A549 (cell line): ENCODE measurements at regions of chr2 and their contacts with region 1.

Region 1: DNA sequence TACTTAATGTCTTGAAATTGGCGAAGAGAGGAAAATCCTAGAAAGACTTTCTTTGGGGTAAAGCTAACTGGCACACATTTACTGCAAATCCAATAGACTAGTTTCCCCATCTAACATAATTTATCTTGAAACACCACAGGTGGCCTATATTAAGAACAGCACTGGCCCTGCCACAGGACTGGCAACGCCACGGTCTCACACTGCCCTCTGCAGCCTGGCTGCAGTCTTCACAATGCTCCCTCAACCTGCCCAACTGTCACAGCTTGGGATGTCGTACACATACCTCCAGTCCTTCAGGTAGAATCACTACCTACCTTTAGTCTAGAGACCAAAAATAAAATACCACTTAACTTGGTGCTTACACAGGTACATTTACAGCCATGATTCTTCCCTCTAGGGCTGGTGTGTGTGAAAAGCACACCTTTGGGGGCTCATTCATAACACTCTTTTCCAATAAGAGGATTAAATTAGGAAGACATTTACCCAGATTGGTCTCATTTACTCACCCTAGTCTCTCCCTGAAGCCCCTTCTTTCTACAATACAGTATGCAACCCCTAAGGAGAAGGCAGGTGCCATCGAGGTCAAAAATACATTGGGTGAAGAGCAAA is 222.2 kb downstream of the C1D start:
- DNase-seq: peak; percentile 46 to 72
- ATAC-seq: peak; percentile 96 to 100
- H3K4me3 ChIP-seq: no peak overlapping the region
- H3K27ac ChIP-seq: no peak overlapping the region
- H3K4me1 ChIP-seq: no peaks in the 10 kb centered on the region
- CTCF ChIP-seq: peak; percentile 89
- EP300 ChIP-seq: no peak
- POLR2A ChIP-seq: no peak
- RAD21 ChIP-seq: peak; percentile 96

Region 2: GRCh38 chr2:66434679-66435548 is 1405.7 kb before region 1 on chr2 and contains the start of gene MEIS1:
- CTCF ChIA-PET with region 1: interaction called, 10 read pairs
- POLR2A ChIA-PET with region 1: no interaction called
- DNase-seq: peak; percentile 93 to 95
- ATAC-seq: peak; percentile 87 to 90
- H3K4me3 ChIP-seq: peak within 1 kb of the TSS; percentile 77
- H3K27ac ChIP-seq: peak within 1 kb of the TSS; percentile 70 to 86
- H3K4me1 ChIP-seq: peaks cover 7% of the 10 kb centered on the region; the same call in 1 of the 3 replicates
- CTCF ChIP-seq: no peak
- EP300 ChIP-seq: no peak
- POLR2A ChIP-seq: peak; percentile 91
- RAD21 ChIP-seq: no peak
- polyA plus RNA-seq, gene MEIS1: 2.9 and 4.2 TPM in 2 replicates

Region 3: DNA sequence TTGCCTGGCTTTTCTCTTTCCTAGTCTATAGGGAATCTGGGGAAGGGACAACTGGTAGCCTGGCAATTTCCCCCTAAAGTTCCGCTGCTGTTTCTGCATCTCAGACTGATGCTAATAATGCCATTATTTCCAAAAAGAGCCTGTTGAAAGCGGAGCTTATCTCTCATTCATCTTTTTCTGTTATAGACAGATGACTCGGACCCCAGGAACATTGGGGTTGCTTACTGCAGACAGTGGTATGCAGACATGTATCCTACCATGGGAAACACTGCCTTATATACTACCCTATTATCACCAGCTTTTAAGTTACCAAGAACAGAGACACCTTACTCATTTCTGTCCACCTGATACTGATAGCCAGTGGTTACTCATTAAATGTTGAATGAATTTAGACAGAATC is 428.1 kb before region 1 on chr2:
- CTCF ChIA-PET with region 1: no interaction called
- POLR2A ChIA-PET with region 1: no interaction called
- DNase-seq: no peak
- ATAC-seq: peak in 1 of 2 experiments; percentile 46; a peak in 2 of 6 replicates
- H3K4me3 ChIP-seq: no peak overlapping the region
- H3K27ac ChIP-seq: no peak overlapping the region
- H3K4me1 ChIP-seq: 0 out of 3 replicates have a peak, but pooled peaks cover 5% of the 10 kb centered on the region
- CTCF ChIP-seq: no peak
- EP300 ChIP-seq: no peak
- POLR2A ChIP-seq: no peak
- RAD21 ChIP-seq: no peak

Region 4: GRCh38 chr2:67752969-67753368 is 87.6 kb before region 1 on chr2:
- CTCF ChIA-PET with region 1: no interaction called
- POLR2A ChIA-PET with region 1: no interaction called
- DNase-seq: no peak
- ATAC-seq: no peak
- H3K4me3 ChIP-seq: no peak overlapping the region
- H3K27ac ChIP-seq: no peak overlapping the region
- H3K4me1 ChIP-seq: no peaks in the 10 kb centered on the region
- CTCF ChIP-seq: no peak
- EP300 ChIP-seq: no peak
- POLR2A ChIP-seq: no peak
- RAD21 ChIP-seq: no peak

Region 5: DNA sequence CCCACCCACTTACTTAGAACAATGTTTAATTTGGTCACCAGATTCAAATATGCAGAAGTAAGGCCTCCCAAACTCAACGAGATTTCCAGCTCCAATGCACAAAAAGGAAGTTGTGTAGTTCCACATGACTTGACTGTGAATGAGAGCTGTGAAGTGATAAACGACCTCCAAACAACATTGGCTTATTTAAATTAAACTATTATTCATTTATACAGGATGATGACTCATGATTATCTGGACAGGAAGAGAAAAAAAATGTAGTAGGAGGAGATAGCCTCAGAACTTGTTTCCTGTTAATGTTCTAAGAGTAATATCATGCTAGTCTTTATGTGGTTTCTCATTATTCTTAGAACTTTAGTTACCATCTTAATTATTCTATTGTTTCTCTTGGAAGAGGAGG is 15.1 kb before region 1 on chr2:
- CTCF ChIA-PET with region 1: interaction called, 15 read pairs
- POLR2A ChIA-PET with region 1: no interaction called
- DNase-seq: no peak
- ATAC-seq: no peak
- H3K4me3 ChIP-seq: no peak overlapping the region
- H3K27ac ChIP-seq: no peak overlapping the region
- H3K4me1 ChIP-seq: no peaks in the 10 kb centered on the region
- CTCF ChIP-seq: no peak
- EP300 ChIP-seq: no peak
- POLR2A ChIP-seq: no peak
- RAD21 ChIP-seq: no peak

Region 6: DNA sequence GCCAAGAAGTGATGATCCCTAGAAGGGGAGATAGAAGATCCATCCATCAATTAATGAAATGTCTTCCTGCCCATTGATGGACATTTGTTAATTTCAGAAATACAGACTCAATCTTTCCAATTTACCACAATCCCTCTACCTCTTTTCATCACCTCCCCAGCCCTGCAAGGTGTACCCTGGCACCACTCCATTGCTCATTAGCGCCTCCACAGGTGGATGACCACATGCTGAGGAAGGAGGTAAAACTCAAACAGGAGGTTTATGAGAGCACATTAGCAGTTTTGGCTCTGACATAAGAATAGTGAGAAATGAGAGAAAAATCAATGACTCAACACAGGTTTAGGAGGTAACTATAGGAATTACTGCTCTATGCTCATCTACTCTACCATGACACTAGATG is 14.2 kb after region 1 on chr2:
- CTCF ChIA-PET with region 1: interaction called, 16 read pairs
- POLR2A ChIA-PET with region 1: no interaction called
- DNase-seq: no peak
- ATAC-seq: no peak
- H3K4me3 ChIP-seq: no peak overlapping the region
- H3K27ac ChIP-seq: no peak overlapping the region
- H3K4me1 ChIP-seq: no peaks in the 10 kb centered on the region
- CTCF ChIP-seq: no peak
- EP300 ChIP-seq: no peak
- POLR2A ChIP-seq: no peak
- RAD21 ChIP-seq: no peak

Region 7: GRCh38 chr2:68031542-68032160 is 191.1 kb after region 1 on chr2:
- CTCF ChIA-PET with region 1: interaction called, 15 read pairs
- POLR2A ChIA-PET with region 1: no interaction called
- DNase-seq: peak; percentile 40 to 57
- ATAC-seq: peak; percentile 80 to 90; a peak in 5 of 6 replicates
- H3K4me3 ChIP-seq: no peak overlapping the region
- H3K27ac ChIP-seq: no peak overlapping the region
- H3K4me1 ChIP-seq: no peaks in the 10 kb centered on the region
- CTCF ChIP-seq: peak; percentile 90
- EP300 ChIP-seq: no peak
- POLR2A ChIP-seq: no peak
- RAD21 ChIP-seq: peak; percentile 91 to 94

Region 8: GRCh38 chr2:68302281-68302875 is 461.8 kb after region 1 on chr2:
- CTCF ChIA-PET with region 1: no interaction called
- POLR2A ChIA-PET with region 1: no interaction called
- DNase-seq: no peak
- ATAC-seq: peak; percentile 37 to 47; a peak in 4 of 6 replicates
- H3K4me3 ChIP-seq: no peak overlapping the region
- H3K27ac ChIP-seq: no peak overlapping the region
- H3K4me1 ChIP-seq: peaks cover 10% of the 10 kb centered on the region; the same call in 1 of the 3 replicates
- CTCF ChIP-seq: no peak
- EP300 ChIP-seq: no peak
- POLR2A ChIP-seq: no peak
- RAD21 ChIP-seq: no peak